Panc1 (cell line): ENCODE measurements at regions of chr2 and their contacts with region 1.

Region 1: DNA sequence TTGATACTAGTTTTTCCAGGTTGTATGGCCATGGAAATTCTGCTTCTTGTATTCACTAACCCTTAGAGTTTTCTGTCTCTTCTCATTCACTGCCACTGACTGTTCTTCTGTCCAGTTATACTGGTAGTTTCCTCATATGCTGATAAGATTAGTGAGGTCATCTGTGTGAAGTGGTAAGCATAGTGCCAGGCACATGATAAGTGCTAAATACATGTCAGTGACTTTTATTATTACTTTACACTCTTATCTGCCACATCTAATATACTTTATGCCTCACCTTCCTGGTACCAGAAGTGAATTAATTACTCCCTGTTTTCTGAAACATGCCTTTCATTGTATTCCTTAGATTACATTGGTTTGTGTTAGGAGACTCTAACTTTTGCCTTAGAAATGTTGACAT is 91.3 kb downstream of the NBEAL1 start:
- DNase-seq: no peak
- ATAC-seq: no peak
- H3K4me3 ChIP-seq: no peak overlapping the region
- H3K27ac ChIP-seq: no peak overlapping the region
- H3K4me1 ChIP-seq: no peaks in the 10 kb centered on the region
- H3K27me3 ChIP-seq: no peaks in the 10 kb centered on the region
- CTCF ChIP-seq: no peak

Region 2: DNA sequence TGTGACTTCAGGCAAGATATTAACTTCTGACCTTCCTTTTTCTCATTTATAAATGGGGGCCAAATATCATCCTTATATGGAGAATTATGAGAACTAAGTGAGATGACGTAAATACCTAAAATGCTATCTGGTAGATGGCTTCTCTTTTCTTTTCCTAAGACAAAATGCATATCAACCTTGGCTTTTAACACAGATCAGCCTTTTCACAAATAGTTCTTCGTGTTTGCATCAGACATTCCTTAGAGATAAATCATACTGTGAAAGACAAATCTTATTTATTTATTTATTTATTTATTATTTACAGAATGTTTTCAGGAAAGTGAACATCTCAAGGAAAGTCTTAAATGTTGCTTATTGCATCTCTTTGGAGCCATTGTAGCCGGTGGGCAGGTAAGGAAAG is 28.5 kb before region 1 on chr2:
- CTCF ChIA-PET with region 1: no interaction called
- POLR2A ChIA-PET with region 1: interaction called, 12 read pairs
- in situ Hi-C with region 1: no loop called
- intact Hi-C with region 1: no loop called
- DNase-seq: peak; percentile 10
- ATAC-seq: no peak
- H3K4me3 ChIP-seq: no peak overlapping the region
- H3K27ac ChIP-seq: no peak overlapping the region
- H3K4me1 ChIP-seq: no peaks in the 10 kb centered on the region
- H3K27me3 ChIP-seq: no peaks in the 10 kb centered on the region
- CTCF ChIP-seq: no peak